Activated CD4-positive, alpha-beta memory T cell treated with anti-CD3 and anti-CD28 coated beads for 36 hours (primary cell): ENCODE measurements at regions of chr12 and their contacts with region 1.

Region 1: GRCh38 chr12:127165567-127166392 is 1101.2 kb upstream of the TMEM132C start:
- DNase-seq: peak; percentile 87
- H3K4me3 Mint-ChIP-seq: peak overlapping the region; percentile 74
- H3K27ac Mint-ChIP-seq: no peak overlapping the region
- H3K4me1 Mint-ChIP-seq: peaks cover 23% of the 10 kb centered on the region
- H3K27me3 Mint-ChIP-seq: peaks cover 16% of the 10 kb centered on the region

Region 2: DNA sequence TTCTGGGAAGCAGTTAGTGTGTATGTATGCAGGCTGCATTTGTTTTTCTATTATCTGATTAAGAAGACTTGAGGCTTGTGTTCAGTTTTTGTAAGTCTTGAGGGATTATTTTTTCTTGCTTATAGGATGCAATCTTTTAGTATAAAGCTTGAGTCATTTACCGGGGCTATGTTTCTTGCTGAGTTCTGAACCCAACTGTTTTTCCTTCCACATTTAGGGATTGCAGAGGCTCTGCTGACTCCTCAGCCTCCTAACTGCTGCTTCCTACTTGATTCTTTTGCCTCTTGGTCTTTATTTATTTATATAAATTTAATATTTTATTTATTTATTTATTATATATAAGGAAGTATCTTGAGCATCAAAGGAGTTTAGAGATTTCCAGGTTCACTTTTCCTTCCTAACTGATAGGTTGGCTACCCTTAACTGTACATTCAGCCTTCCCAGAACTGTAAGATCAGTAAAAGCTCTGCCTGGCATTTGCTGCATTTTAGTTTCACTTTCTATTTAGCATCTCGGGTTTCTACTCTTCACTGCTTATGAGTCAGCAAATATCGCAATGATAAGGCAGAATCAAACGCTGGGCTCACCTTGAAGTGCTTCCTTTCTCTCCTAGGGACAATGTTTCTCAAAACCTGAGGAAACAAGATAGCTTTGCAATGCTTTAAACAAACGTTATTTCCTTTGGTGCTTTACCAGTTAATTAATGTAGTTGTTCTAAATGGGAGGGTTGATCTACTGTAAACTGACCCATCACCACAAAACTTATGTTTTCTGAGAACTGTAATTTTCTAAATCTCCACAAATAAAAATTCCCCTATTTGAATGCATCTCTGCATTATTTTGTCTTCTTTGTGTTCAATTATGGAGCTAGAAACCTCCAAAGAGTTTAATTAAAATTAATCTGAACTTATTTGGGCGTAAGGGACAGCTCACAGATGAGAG is 82.5 kb before region 1 on chr12:
- CTCF ChIA-PET with region 1: interaction called, 4 read pairs
- POLR2A ChIA-PET with region 1: no interaction called
- intact Hi-C with region 1: loop called (anchors 1 kb)
- DNase-seq: peak; percentile 20
- H3K4me3 Mint-ChIP-seq: peak overlapping the region; percentile 36
- H3K27ac Mint-ChIP-seq: no peak overlapping the region
- H3K4me1 Mint-ChIP-seq: peaks cover 14% of the 10 kb centered on the region
- H3K27me3 Mint-ChIP-seq: peaks cover 4% of the 10 kb centered on the region

Region 3: DNA sequence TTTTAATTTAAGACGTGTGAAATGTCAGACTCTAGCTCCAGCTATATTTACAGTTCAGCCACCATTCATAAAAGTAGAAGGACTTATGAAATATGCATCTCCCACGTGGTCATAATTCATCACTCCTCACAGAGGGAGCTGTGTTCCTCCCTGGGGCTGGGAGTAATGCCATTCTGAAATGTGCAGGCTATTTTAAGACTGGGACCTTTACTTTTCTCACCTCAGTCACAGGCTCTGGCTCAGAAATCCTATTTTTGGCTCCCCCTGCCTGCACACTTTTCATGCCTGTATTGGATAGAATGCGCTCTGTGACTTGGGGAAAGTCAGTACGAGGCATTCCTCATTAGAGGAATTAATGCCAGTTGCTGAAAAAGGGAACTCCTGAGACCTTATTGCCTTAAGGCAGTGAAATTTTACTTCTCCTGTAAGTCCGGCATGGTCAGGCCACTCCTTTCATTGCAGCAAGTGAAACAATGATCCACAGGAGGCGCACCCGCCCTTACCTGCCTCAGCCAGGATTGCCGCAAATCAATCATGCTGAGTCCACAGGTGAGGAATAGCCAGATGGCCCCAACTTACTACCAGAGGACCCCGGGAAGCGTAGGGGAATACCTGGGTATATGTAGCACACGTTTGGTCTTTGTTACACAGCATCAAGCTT is 32.0 kb before region 1 on chr12:
- CTCF ChIA-PET with region 1: no interaction called
- POLR2A ChIA-PET with region 1: no interaction called
- intact Hi-C with region 1: no loop called
- DNase-seq: no peak
- H3K4me3 Mint-ChIP-seq: no peak overlapping the region
- H3K27ac Mint-ChIP-seq: no peak overlapping the region
- H3K4me1 Mint-ChIP-seq: peaks cover 2% of the 10 kb centered on the region
- H3K27me3 Mint-ChIP-seq: peaks cover 19% of the 10 kb centered on the region

Region 4: GRCh38 chr12:127559349-127560040 is 393.7 kb after region 1 on chr12:
- CTCF ChIA-PET with region 1: no interaction called
- POLR2A ChIA-PET with region 1: no interaction called
- intact Hi-C with region 1: loop called (anchors 10 kb)
- DNase-seq: peak; percentile 89
- H3K4me3 Mint-ChIP-seq: no peak overlapping the region
- H3K27ac Mint-ChIP-seq: peak overlapping the region; percentile 85
- H3K4me1 Mint-ChIP-seq: peaks cover 22% of the 10 kb centered on the region
- H3K27me3 Mint-ChIP-seq: no peaks in the 10 kb centered on the region